Activated CD4-positive, alpha-beta T cell treated with anti-CD3 and anti-CD28 coated beads for 36 hours (primary cell): ENCODE measurements at regions of chr14 and their contacts with region 1.

Region 1: GRCh38 chr14:49892636-49893308 is at the start of gene ARF6:
- DNase-seq: peak; percentile 98
- ATAC-seq: peak; percentile 76
- H3K4me3 Mint-ChIP-seq: peak within 1 kb of the TSS; percentile 91
- H3K27ac Mint-ChIP-seq: peak within 1 kb of the TSS; percentile 98
- H3K4me1 Mint-ChIP-seq: peaks cover 16% of the 10 kb centered on the region
- H3K27me3 Mint-ChIP-seq: no peaks in the 10 kb centered on the region
- total RNA-seq, gene ARF6: 172 to 181 TPM

Region 2: DNA sequence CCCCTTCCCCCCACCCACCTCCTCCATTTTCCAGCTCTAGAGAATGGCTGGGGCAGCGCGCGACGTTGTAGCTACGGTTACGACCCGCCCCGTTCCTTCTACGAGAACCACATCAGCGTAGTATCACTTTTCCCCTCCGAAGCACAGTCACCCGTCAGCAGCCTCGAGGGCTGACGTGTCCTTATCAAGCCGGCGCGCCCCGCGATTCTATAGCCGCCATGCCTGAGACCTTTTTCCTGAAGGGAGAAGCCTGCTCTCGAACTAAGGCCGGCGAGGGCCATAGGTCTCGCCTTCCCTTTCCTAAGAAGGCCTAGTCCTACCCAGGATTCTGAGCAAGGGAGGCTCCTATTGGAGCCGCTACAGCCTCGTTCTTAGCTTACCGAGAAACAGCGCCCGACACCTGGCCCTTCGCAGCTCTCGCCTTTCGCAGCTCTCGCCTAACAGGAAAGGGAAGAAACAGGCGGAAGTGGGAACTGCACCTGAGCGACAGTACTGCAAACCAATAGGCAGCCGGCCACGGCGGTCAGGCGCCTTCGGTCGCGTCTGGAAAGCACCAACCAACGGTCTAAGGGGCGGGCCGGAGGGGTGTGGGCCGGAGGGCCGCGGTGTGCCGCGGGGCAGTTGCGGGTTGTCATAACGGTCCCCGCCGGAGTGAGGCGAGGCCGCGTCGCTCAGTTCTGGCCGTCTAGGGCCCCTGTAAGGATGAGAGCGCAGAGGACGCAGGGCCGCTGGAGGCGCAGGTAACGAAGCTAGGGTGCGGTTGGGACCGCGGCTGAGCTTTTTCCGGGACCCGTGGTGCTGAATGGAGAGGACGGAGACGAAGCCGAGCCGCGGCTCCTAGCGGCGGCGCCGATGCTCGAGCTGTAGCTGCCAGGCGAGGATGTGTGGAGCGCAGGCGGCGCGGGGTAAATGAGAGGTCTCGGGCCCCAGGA is 272.3 kb before region 1 on chr14 and contains the starts of genes MGAT2 and RPL36AL:
- CTCF ChIA-PET with region 1: no interaction called
- POLR2A ChIA-PET with region 1: no interaction called
- intact Hi-C with region 1: loop called (anchors 1 to 5 kb)
- DNase-seq: peak; percentile 97
- ATAC-seq: peak; percentile 90
- H3K4me3 Mint-ChIP-seq: peak within 1 kb of the TSS; percentile 93
- H3K27ac Mint-ChIP-seq: peak within 1 kb of the TSS; percentile 97
- H3K4me1 Mint-ChIP-seq: peaks cover 51% of the 10 kb centered on the region
- H3K27me3 Mint-ChIP-seq: no peaks in the 10 kb centered on the region
- total RNA-seq, gene MGAT2: 23.8 to 32.2 TPM
- total RNA-seq, gene RPL36AL: 272 to 309 TPM

Region 3: DNA sequence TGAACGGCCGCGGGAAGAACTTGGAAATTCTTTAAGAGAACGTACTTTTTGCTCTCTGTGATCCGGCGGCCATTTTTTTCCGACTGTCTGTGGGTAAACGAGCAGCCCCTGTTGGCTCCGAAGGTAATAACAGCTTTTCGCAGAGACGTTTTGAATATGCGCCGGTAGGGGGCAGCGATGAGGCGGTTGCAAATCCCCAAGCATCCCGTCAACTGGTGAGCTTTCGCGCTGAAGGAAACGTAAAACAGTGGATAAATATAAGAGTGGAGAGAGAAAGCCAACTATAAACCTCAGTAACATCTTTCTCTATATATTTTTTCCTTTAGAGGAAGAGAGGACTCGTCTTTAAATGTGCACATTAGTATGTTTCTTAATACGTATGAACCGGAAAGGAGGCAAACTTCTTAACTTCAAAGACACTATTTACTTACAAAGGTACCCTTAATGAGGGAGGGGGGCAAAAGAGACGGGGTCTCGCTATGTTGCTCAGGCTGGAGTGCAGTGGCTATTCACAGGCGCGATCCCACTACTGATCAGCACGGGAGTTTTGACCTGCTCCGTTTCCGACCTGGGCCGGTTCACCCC is 30.6 kb before region 1 on chr14:
- CTCF ChIA-PET with region 1: interaction called, 22 read pairs
- POLR2A ChIA-PET with region 1: interaction called, 11 read pairs
- intact Hi-C with region 1: loop called in 1 of 2 experiments (anchors 1 kb)
- DNase-seq: peak; percentile 92
- ATAC-seq: peak; percentile 13
- H3K4me3 Mint-ChIP-seq: no peak overlapping the region
- H3K27ac Mint-ChIP-seq: no peak overlapping the region
- H3K4me1 Mint-ChIP-seq: peaks cover 20% of the 10 kb centered on the region
- H3K27me3 Mint-ChIP-seq: no peaks in the 10 kb centered on the region

Region 4: DNA sequence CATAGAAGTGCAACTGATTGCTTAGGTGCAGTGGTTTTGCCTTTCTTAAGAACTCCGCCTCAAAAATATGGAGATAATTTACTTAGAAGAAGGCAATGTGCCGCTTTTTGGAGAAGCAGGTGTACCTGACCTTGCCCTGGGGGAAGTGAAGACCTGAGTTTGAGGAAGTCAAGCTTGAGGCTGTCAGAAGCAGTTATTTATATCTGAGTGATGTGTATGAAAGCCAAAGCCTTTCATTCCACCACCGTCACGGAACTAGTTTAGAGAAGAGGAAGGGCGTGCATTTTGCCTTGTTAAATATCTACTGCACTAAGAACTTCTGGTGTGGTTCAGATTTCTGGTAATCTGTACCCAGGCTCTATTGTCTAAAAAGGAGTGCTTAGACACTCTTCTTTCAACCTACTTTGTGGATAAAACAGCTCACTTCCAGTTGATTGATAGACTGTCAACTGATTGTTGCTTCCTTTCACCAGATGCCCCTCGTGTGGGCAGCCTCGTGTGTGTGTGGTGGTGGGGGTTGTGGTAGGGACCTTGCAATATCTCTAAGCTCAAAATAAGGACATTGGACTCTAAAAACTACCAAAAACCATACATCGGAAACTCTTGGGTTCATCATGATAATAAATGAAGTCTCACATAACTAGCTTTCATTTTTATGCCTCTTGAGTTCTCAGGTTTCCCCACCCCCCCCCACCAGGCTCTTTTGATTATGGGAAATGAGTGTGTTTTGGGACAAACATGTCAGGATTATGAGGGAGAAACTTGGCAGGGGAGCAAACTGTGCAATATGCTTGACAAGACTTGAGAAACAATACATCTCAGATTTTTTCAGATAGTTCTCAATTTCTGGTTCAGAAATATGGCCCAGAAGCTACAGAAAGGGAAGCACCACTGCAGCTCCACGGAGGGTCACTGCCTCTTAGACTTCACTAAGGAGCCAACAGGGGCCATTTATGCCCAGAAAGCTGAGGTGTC is 78.7 kb after region 1 on chr14:
- CTCF ChIA-PET with region 1: interaction called, 3 read pairs
- POLR2A ChIA-PET with region 1: interaction called, 5 read pairs
- intact Hi-C with region 1: loop called in 1 of 2 experiments (anchors 1 kb)
- DNase-seq: peak; percentile 77
- ATAC-seq: peak; percentile 66
- H3K4me3 Mint-ChIP-seq: peak overlapping the region; percentile 75
- H3K27ac Mint-ChIP-seq: peak overlapping the region; percentile 98
- H3K4me1 Mint-ChIP-seq: peaks cover 67% of the 10 kb centered on the region
- H3K27me3 Mint-ChIP-seq: no peaks in the 10 kb centered on the region

Region 5: GRCh38 chr14:50038398-50039119 is 145.8 kb after region 1 on chr14:
- CTCF ChIA-PET with region 1: interaction called, 7 read pairs
- POLR2A ChIA-PET with region 1: interaction called, 36 read pairs
- intact Hi-C with region 1: loop called (anchors 1 kb)
- DNase-seq: peak; percentile 88
- ATAC-seq: peak; percentile 82
- H3K4me3 Mint-ChIP-seq: peak overlapping the region; percentile 75
- H3K27ac Mint-ChIP-seq: peak overlapping the region; percentile 99
- H3K4me1 Mint-ChIP-seq: peaks cover 66% of the 10 kb centered on the region
- H3K27me3 Mint-ChIP-seq: no peaks in the 10 kb centered on the region

Region 6: DNA sequence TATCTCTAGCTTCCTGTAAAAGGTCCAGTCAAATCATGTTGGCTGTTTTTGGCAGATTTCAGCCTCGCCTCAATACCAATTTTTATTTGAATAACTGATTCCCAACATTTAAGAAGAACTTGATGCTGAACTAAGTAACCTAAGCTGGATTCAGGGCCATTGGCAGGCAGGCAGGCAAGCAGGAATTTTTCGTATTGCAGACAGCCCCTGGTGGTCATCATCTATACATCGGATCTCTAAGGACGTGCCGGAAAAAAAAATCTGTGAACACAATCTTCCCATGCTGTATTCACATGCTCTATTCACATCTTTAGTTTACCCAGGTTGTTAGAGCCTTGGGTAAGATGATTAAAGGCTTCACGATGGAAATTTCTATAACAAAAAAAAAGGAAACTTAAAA is 216.6 kb after region 1 on chr14:
- CTCF ChIA-PET with region 1: interaction called, 8 read pairs
- POLR2A ChIA-PET with region 1: no interaction called
- intact Hi-C with region 1: loop called in 1 of 2 experiments (anchors 1 kb)
- DNase-seq: no peak
- ATAC-seq: no peak
- H3K4me3 Mint-ChIP-seq: no peak overlapping the region
- H3K27ac Mint-ChIP-seq: no peak overlapping the region
- H3K4me1 Mint-ChIP-seq: peaks cover 32% of the 10 kb centered on the region
- H3K27me3 Mint-ChIP-seq: no peaks in the 10 kb centered on the region

Region 7: DNA sequence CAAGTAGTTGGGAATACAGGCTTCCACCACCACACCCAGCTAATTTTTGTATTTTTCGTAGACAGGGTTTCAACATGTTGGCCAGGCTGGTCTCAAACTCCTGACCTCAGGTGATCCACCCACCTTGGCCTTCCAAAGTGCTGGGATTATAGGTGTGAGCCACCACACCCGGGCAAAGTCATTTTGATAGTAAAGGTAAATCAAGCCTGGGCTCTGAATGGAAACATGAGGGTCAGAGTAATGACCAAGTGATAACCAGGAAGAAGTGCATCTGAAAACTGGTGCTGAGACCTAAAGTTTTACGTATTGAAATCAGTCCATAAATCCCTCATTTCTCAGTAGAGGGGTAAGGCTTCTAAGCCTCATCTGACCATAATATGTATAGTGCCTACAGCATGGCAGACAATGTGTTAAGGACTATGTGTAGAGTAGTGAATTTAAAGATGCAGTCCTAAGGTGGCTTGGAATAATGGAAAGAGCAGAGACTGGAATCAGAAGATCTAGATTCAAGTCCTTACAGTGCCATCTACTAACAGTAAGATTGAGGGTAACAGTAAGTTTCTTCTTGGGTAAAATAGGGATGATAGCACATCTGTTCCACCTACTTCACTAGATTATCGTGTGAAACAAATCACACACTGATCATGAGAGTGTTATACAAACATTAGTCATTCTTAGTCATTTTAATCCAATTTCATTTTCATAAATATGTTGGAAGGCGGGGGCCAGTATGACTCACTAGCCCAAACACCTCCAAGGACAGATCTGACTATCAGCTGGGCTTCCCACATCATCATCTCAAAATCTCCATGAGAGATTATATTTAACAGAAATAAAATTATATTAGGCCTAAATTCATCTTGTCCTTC is 628.4 kb after region 1 on chr14:
- CTCF ChIA-PET with region 1: no interaction called
- POLR2A ChIA-PET with region 1: no interaction called
- intact Hi-C with region 1: loop called in 1 of 2 experiments (anchors 1 kb)
- DNase-seq: peak; percentile 84
- ATAC-seq: peak; percentile 81
- H3K4me3 Mint-ChIP-seq: peak overlapping the region; percentile 55
- H3K27ac Mint-ChIP-seq: peak overlapping the region; percentile 94
- H3K4me1 Mint-ChIP-seq: peaks cover 56% of the 10 kb centered on the region
- H3K27me3 Mint-ChIP-seq: no peaks in the 10 kb centered on the region